B cell (primary cell): ENCODE measurements at regions of chr16 and their contacts with region 1.

Region 1: DNA sequence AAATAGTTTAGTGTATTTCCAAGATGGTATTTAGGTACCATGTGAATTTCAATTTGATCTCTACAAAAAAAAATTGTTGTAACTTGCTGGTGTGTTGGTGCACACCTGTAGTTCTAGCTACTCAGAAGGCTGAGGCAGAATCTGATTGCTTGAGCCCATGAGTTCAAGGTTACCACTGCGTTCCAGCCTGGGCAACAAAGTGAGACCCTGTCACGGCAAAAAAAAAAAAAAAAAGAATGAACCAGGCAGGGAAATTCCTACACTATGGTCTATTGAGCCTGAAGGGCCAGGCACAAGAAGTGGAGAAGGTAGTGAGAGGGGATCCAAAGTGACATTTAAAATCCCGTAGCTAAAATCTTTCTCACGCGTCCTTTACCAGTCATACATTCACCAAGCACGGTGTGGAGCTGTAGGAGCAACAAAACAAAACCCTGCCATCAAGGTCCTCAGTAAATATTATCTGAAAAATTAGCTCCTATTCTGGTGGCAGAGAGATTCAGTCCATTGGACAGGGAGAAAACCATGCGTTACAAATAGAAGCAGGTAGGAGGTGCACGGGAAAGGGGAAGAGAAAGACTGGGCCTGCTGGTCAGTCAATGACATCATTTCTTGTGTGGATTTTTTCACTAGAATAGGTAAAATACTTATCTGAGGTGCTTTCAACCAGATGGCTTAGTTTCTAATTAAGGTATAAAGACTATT is 27.3 kb downstream of the TXNDC11 start:
- DNase-seq: no peak
- ATAC-seq: no peak
- H3K4me3 ChIP-seq: no peak overlapping the region
- H3K4me3 Mint-ChIP-seq: no peak overlapping the region
- H3K27ac ChIP-seq: no peak overlapping the region
- H3K27ac Mint-ChIP-seq: peak overlapping the region; percentile 42
- H3K4me1 ChIP-seq: peaks cover 0 to 7% of the 10 kb centered on the region in 2 donors
- H3K4me1 Mint-ChIP-seq: peaks cover 25% of the 10 kb centered on the region
- H3K27me3 ChIP-seq: no peaks in the 10 kb centered on the region
- H3K27me3 Mint-ChIP-seq: no peaks in the 10 kb centered on the region
- CTCF ChIP-seq: no peak

Region 2: DNA sequence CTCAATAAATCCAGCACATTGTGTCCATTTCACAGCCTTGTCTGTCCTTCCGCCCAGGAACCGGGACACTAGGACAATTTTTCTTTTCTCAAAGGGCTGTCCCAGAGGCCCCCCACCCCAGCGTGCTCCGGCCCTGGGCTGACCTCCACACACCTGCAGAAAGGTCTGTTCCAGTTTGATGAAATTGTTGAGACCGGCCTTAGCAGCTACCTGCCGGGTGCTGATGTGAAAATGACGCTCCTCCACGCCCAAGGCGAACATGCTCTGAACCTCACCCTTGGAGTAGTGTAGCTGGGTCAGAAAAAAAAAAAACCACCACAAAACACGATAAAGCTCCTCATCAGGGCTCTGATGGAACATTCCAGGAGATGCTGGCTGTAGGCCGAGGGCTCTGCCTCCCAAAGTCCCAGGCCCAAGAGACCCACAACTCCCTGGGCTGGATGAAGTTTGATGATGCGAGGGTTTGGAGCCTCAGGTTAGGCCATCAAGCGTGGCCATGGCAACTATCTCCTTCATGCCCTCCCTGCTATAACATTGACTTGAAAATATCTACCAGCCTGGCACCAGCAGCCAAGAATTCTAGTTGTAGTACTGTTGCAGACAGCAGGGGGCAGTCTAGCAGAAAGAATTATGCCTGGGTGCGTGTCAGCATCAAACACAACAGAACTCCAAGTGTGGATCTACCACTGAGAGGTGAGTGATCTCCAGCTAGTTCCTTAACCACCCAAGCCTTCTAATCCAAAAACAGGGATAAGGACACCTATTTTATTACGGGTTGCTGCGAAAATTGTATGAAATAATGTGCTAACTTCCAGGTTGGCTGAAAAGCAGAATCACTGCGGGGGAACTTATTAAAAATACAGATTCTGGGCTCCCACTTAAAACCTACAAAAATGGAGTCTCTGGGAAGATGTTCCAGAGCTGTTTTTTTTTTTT is 308.1 kb before region 1 on chr16:
- CTCF ChIA-PET with region 1: interaction called, 42 read pairs
- POLR2A ChIA-PET with region 1: interaction called, 6 read pairs
- intact Hi-C with region 1: loop called (anchors 1 kb)
- DNase-seq: peak; percentile 78
- ATAC-seq: peak; percentile 71
- H3K4me3 ChIP-seq: no peak overlapping the region
- H3K4me3 Mint-ChIP-seq: no peak overlapping the region
- H3K27ac ChIP-seq: no peak overlapping the region
- H3K27ac Mint-ChIP-seq: no peak overlapping the region
- H3K4me1 ChIP-seq: no peaks in the 10 kb centered on the region
- H3K4me1 Mint-ChIP-seq: peaks cover 2% of the 10 kb centered on the region
- H3K27me3 ChIP-seq: no peaks in the 10 kb centered on the region
- H3K27me3 Mint-ChIP-seq: no peaks in the 10 kb centered on the region
- CTCF ChIP-seq: peak; percentile 83

Region 3: DNA sequence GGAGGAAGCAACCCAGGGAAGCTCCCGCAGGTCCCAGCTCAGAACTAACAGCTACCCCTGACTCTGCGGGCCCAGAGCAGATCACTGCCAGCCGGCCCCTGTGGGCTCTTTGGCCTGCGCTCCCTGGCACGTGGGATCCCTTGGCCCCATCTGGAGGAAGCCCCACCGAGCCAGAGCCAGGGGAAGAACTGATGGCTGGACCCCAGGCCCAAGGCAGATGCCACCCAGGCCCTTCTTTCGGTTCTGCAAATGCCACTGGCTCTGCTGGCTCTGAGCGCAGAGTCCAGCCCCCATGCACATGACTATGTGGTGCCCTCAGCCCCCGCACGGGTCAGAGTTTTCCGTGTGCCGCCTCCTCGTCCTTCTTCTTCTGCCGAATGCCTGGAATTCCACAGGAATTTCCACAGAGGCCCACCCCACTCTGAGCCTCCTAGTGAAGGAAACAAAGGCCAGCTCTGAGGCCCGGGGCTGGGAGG is 82.9 kb before region 1 on chr16:
- CTCF ChIA-PET with region 1: interaction called, 10 read pairs
- POLR2A ChIA-PET with region 1: no interaction called
- intact Hi-C with region 1: no loop called
- DNase-seq: no peak
- ATAC-seq: no peak
- H3K4me3 ChIP-seq: no peak overlapping the region
- H3K4me3 Mint-ChIP-seq: no peak overlapping the region
- H3K27ac ChIP-seq: no peak overlapping the region
- H3K27ac Mint-ChIP-seq: no peak overlapping the region
- H3K4me1 ChIP-seq: peaks cover 22 to 41% of the 10 kb centered on the region in 2 donors
- H3K4me1 Mint-ChIP-seq: peaks cover 33% of the 10 kb centered on the region
- H3K27me3 ChIP-seq: no peaks in the 10 kb centered on the region
- H3K27me3 Mint-ChIP-seq: no peaks in the 10 kb centered on the region
- CTCF ChIP-seq: no peak

Region 4: DNA sequence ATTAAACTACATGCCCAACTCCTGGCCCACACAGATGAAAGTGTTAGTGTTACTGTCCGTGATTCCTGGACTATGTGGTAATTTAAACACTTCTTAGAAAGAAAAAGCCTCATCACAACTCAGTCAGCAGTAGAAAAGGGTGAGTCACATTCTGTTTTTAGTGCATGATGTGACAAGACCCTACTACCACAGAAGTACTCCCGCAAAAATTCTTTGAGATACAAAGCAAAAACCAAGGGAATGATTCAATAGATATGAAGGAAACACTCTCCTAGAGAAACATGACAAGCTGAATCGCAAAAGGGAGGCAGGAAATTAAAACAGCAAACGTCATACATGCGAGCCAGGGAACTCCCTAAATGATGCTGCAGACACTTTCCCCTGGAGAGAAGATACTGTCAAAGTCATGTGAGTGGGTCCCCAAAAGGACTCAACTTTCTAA is 32.7 kb before region 1 on chr16:
- CTCF ChIA-PET with region 1: interaction called, 15 read pairs
- POLR2A ChIA-PET with region 1: no interaction called
- intact Hi-C with region 1: loop called (anchors 5 kb)
- DNase-seq: peak; percentile 85
- ATAC-seq: peak; percentile 5
- H3K4me3 ChIP-seq: peak overlapping the region in 2 of 5 experiments; percentile 0 to 35
- H3K4me3 Mint-ChIP-seq: peak overlapping the region; percentile 78
- H3K27ac ChIP-seq: peak overlapping the region; percentile 95 to 99
- H3K27ac Mint-ChIP-seq: peak overlapping the region; percentile 91
- H3K4me1 ChIP-seq: peaks cover 96 to 97% of the 10 kb centered on the region in 2 donors
- H3K4me1 Mint-ChIP-seq: peaks cover 96% of the 10 kb centered on the region
- H3K27me3 ChIP-seq: no peaks in the 10 kb centered on the region
- H3K27me3 Mint-ChIP-seq: no peaks in the 10 kb centered on the region
- CTCF ChIP-seq: no peak

Region 5: GRCh38 chr16:11742539-11743307 is 27.3 kb after region 1 on chr16 and contains the start of gene TXNDC11:
- CTCF ChIA-PET with region 1: interaction called, 18 read pairs
- POLR2A ChIA-PET with region 1: interaction called, 4 read pairs
- intact Hi-C with region 1: no loop called
- DNase-seq: peak; percentile 100
- ATAC-seq: peak; percentile 91
- H3K4me3 ChIP-seq: peak within 1 kb of the TSS; percentile 76 to 97 (median 83)
- H3K4me3 Mint-ChIP-seq: peak within 1 kb of the TSS; percentile 97
- H3K27ac ChIP-seq: peak within 1 kb of the TSS; percentile 81 to 88
- H3K27ac Mint-ChIP-seq: peak within 1 kb of the TSS; percentile 96
- H3K4me1 ChIP-seq: peaks cover 31 to 44% of the 10 kb centered on the region in 2 donors
- H3K4me1 Mint-ChIP-seq: peaks cover 52% of the 10 kb centered on the region
- H3K27me3 ChIP-seq: no peaks in the 10 kb centered on the region
- H3K27me3 Mint-ChIP-seq: no peaks in the 10 kb centered on the region
- CTCF ChIP-seq: no peak
- total RNA-seq, gene TXNDC11: 49.7 and 50.2 TPM in 2 replicates